GM13977 (cell line): ENCODE measurements at regions of chr17 and their contacts with region 1.

Region 1: GRCh38 chr17:56451629-56452028 is 141.9 kb upstream of the NOG start:
- DNase-seq: no peak
- CTCF ChIP-seq: no peak

Region 2: DNA sequence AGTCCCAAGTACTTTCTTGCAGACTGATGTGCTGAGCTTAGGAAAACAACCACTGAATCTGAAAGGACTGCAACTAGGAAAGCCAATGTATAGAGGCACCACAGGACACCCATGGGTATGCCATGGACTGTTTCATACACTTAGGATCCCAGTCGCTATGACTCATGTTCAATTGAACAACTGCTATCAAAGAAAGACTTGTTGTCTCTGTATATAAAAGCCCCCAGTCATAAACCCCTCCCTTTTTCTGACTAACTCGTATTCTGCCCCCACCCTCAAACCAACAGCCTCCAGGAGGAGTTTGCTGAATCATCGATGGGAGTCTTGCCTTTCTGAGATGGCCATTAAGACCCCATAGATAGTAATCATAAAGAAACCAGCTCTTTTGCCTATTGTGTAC is 93.0 kb before region 1 on chr17:
- in situ Hi-C with region 1: loop called (anchors 25 kb)
- DNase-seq: no peak
- CTCF ChIP-seq: no peak

Region 3: GRCh38 chr17:56392051-56392673 is 59.5 kb before region 1 on chr17:
- in situ Hi-C with region 1: no loop called
- DNase-seq: no peak
- CTCF ChIP-seq: no peak